Endothelial cell of umbilical vein (primary cell): ENCODE measurements at regions of chr9 and their contacts with region 1.

Region 1: GRCh38 chr9:20622330-20623020 is at the start of gene MLLT3:
- DNase-seq: peak; percentile 96
- H3K4me3 ChIP-seq: peak within 1 kb of the TSS; percentile 43 to 81 (median 66)
- H3K27ac ChIP-seq: peak within 1 kb of the TSS; percentile 33
- H3K4me1 ChIP-seq: peaks cover 30% of the 10 kb centered on the region
- H3K27me3 ChIP-seq: no peaks in the 10 kb centered on the region
- CTCF ChIP-seq: peak in 1 of 2 donors; percentile 9
- POLR2A ChIP-seq: no peak
- total RNA-seq, gene MLLT3: 10.0 and 11.1 TPM in 2 replicates

Region 2: GRCh38 chr9:20426019-20426418 is 196.5 kb before region 1 on chr9:
- CTCF ChIA-PET with region 1: interaction called, 3 read pairs
- POLR2A ChIA-PET with region 1: no interaction called
- dilution Hi-C with region 1: no loop called
- intact Hi-C with region 1: loop called (anchors 1 kb)
- DNase-seq: no peak
- H3K4me3 ChIP-seq: no peak overlapping the region
- H3K27ac ChIP-seq: no peak overlapping the region
- H3K4me1 ChIP-seq: no peaks in the 10 kb centered on the region
- H3K27me3 ChIP-seq: no peaks in the 10 kb centered on the region
- CTCF ChIP-seq: no peak
- POLR2A ChIP-seq: no peak

Region 3: GRCh38 chr9:20479419-20480155 is 142.9 kb before region 1 on chr9:
- CTCF ChIA-PET with region 1: no interaction called
- POLR2A ChIA-PET with region 1: no interaction called
- dilution Hi-C with region 1: no loop called
- intact Hi-C with region 1: no loop called
- DNase-seq: no peak
- H3K4me3 ChIP-seq: no peak overlapping the region
- H3K27ac ChIP-seq: no peak overlapping the region
- H3K4me1 ChIP-seq: no peaks in the 10 kb centered on the region
- H3K27me3 ChIP-seq: peaks cover 2 to 3% of the 10 kb centered on the region in 2 experiments
- CTCF ChIP-seq: no peak
- POLR2A ChIP-seq: no peak

Region 4: DNA sequence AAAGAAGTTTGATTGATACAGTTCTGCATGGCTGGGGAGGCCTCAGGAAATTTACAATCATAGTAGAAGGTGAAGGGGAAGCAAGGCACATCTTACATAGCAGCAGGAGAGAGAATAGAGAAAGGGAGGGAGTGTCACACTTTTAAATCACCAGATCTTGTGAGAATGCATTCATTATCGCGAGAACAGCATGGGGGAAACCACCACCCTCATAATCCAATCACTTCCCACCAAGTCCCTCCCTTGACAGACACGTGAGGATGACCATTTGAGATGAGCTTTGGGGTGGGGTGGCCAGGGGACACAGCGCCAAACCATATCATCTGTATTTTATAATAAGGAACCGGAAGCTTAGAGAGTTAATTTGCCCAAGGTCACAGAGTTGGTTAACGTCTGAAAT is 47.9 kb after region 1 on chr9:
- CTCF ChIA-PET with region 1: no interaction called
- POLR2A ChIA-PET with region 1: no interaction called
- dilution Hi-C with region 1: no loop called
- intact Hi-C with region 1: no loop called
- DNase-seq: no peak
- H3K4me3 ChIP-seq: no peak overlapping the region
- H3K27ac ChIP-seq: no peak overlapping the region
- H3K4me1 ChIP-seq: no peaks in the 10 kb centered on the region
- H3K27me3 ChIP-seq: no peaks in the 10 kb centered on the region
- CTCF ChIP-seq: no peak
- POLR2A ChIP-seq: no peak

Region 5: GRCh38 chr9:20684035-20684872 is 61.8 kb after region 1 on chr9 and contains the start of gene FOCAD:
- CTCF ChIA-PET with region 1: interaction called, 49 read pairs
- POLR2A ChIA-PET with region 1: interaction called, 11 read pairs
- dilution Hi-C with region 1: no loop called
- intact Hi-C with region 1: loop called (anchors 1 kb)
- DNase-seq: peak; percentile 97
- H3K4me3 ChIP-seq: peak within 1 kb of the TSS; percentile 69 to 83 (median 73)
- H3K27ac ChIP-seq: peak within 1 kb of the TSS; percentile 91
- H3K4me1 ChIP-seq: peaks cover 30% of the 10 kb centered on the region
- H3K27me3 ChIP-seq: no peaks in the 10 kb centered on the region
- CTCF ChIP-seq: no peak
- POLR2A ChIP-seq: peak; percentile 97
- total RNA-seq, gene FOCAD: 59.4 and 66.9 TPM in 2 replicates

Region 6: DNA sequence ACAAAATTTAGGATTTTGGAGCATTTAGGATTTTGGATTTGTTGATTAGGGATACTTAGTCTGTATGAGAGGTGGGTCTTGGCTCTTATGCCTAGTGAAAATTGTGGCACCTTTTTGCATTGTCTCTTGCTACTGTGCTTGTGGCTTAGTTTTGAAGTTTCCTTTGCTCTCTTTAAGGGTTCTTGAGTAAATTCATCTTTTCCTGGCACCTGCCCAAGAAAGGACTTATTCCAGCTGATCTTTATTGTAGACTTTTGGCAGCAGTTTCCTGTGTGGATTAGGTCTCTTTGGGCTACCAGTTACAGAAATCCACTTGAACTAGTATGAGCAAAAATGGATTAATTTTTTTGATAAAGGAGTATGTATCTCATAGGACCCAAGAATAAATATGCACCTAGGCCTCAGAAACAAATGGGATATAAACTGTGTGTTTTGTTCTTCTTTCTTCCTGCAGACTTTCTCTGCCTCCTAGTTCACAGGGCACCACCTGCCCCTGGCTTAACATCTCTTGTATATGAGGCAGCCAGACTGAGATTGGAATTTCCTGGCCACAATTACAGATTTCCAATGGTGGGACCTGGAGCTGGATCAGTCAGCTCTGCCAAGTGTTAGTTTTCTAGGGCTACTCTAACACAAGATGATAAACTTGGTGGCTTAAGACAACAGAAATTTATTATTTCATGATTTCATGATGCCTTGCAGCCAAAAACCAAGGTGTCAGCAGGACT is 106.2 kb after region 1 on chr9:
- CTCF ChIA-PET with region 1: interaction called, 4 read pairs
- POLR2A ChIA-PET with region 1: interaction called, 3 read pairs
- dilution Hi-C with region 1: no loop called
- intact Hi-C with region 1: loop called (anchors 1 kb)
- DNase-seq: peak; percentile 91
- H3K4me3 ChIP-seq: no peak overlapping the region
- H3K27ac ChIP-seq: peak overlapping the region; percentile 98
- H3K4me1 ChIP-seq: peaks cover 57% of the 10 kb centered on the region
- H3K27me3 ChIP-seq: no peaks in the 10 kb centered on the region
- CTCF ChIP-seq: no peak
- POLR2A ChIP-seq: no peak

Region 7: GRCh38 chr9:20835364-20836286 is 213.2 kb after region 1 on chr9:
- CTCF ChIA-PET with region 1: no interaction called
- POLR2A ChIA-PET with region 1: no interaction called
- dilution Hi-C with region 1: no loop called
- intact Hi-C with region 1: no loop called
- DNase-seq: no peak
- H3K4me3 ChIP-seq: no peak overlapping the region
- H3K27ac ChIP-seq: no peak overlapping the region
- H3K4me1 ChIP-seq: no peaks in the 10 kb centered on the region
- H3K27me3 ChIP-seq: no peaks in the 10 kb centered on the region
- CTCF ChIP-seq: no peak
- POLR2A ChIP-seq: no peak

Region 8: DNA sequence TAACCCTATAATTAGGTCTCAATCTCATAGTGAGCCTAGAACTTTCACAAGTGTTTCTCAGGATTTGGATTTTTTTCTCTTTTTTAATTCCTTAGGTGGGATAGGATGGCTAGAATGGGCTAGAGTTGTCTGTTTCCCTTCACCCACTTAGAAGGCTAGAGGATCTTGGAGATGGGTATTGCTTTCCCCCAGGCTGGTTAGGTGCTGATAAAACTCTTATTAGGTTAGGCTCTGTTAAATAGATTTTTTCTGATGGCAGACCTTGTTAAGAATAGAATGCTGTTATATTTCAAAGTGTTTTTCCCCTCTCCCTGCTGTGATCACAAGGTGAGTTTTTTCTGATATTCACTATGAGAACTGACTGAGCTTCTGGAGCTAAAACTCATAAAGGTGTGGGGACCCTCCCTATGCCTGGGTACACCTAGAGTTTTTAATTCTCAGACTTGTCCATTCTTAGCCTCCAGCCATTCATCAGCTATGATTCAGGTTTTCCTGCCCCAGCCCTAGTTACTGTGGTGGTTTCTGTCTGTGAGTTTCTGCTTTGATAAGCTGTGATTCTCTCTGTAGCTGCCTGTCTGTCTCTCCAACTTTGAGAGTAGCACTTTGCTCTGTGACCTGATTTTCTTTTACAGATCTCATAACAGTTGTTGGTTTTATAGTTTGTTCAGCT is 276.5 kb after region 1 on chr9:
- CTCF ChIA-PET with region 1: interaction called, 11 read pairs
- POLR2A ChIA-PET with region 1: no interaction called
- dilution Hi-C with region 1: no loop called
- intact Hi-C with region 1: no loop called
- DNase-seq: peak; percentile 70
- H3K4me3 ChIP-seq: no peak overlapping the region
- H3K27ac ChIP-seq: no peak overlapping the region
- H3K4me1 ChIP-seq: peaks cover 13% of the 10 kb centered on the region
- H3K27me3 ChIP-seq: no peaks in the 10 kb centered on the region
- CTCF ChIP-seq: no peak
- POLR2A ChIP-seq: no peak